Activated T-helper 2 cell treated with anti-CD3 and anti-CD28 coated beads, Interferon-gamma antibody, Interleukin-2, Interleukin-4, amounts not matched to agents 10 μg/mL and 5 μg/mL and 100 μg/mL, durations not matched to agents 14 hours and 24 hours and 36 hours (primary cell): ENCODE measurements at regions of chr11 and their contacts with region 1.

Region 1: GRCh38 chr11:117946842-117947526 is 17.8 kb upstream of the TMPRSS13 start:
- DNase-seq: peak; percentile 74
- H3K4me3 Mint-ChIP-seq: no peak overlapping the region
- H3K27ac Mint-ChIP-seq: peak overlapping the region; percentile 60
- H3K4me1 Mint-ChIP-seq: peaks cover 78% of the 10 kb centered on the region
- H3K27me3 Mint-ChIP-seq: no peaks in the 10 kb centered on the region

Region 2: DNA sequence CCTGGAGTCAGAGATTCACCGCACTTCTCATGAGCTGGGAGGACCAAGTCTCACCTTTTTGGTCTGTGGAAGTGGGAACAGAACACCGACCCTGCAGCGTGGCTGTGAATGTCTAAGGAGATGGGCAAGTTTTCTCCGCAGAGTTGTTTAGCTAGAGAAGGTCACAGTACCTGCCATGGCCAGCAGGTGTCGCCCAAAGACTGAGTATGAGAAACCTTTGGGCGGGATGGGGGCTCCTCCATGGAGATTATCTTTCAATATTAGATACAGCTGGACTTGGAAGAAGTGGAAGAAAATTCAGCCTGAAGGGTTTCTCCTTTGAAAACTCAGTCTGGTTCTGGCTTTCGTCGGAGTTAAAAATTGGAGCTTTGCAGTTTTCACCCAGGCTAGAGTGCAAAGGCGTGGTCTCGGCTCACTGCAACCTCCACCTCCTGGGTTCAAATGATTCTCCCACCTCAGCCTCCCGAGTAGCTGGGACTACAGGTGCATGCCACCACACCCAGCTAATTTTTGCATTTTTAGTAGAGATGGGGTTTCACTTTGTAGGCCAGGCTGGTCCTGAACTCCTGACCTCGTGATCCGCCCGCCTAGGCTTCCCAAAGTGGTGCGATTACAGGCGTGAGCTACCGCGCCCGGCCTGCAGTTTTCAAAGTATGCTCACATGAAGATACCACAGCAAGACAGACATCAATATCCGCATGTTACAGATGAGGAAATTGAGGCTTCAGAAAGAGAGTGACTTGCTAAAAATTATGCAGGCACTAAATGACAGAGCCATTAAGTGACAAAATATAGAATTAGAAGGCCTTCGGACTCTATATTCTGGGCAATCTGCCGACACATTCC is 139.3 kb before region 1 on chr11:
- intact Hi-C with region 1: loop called (anchors 2 kb)
- DNase-seq: peak; percentile 54
- H3K4me3 Mint-ChIP-seq: no peak overlapping the region
- H3K27ac Mint-ChIP-seq: no peak overlapping the region
- H3K4me1 Mint-ChIP-seq: peaks cover 8% of the 10 kb centered on the region
- H3K27me3 Mint-ChIP-seq: peaks cover 10% of the 10 kb centered on the region

Region 3: GRCh38 chr11:117843666-117844484 is 103.1 kb before region 1 on chr11:
- intact Hi-C with region 1: loop called (anchors 1 kb)
- DNase-seq: peak; percentile 66
- H3K4me3 Mint-ChIP-seq: no peak overlapping the region
- H3K27ac Mint-ChIP-seq: no peak overlapping the region
- H3K4me1 Mint-ChIP-seq: no peaks in the 10 kb centered on the region
- H3K27me3 Mint-ChIP-seq: peaks cover 7% of the 10 kb centered on the region

Region 4: DNA sequence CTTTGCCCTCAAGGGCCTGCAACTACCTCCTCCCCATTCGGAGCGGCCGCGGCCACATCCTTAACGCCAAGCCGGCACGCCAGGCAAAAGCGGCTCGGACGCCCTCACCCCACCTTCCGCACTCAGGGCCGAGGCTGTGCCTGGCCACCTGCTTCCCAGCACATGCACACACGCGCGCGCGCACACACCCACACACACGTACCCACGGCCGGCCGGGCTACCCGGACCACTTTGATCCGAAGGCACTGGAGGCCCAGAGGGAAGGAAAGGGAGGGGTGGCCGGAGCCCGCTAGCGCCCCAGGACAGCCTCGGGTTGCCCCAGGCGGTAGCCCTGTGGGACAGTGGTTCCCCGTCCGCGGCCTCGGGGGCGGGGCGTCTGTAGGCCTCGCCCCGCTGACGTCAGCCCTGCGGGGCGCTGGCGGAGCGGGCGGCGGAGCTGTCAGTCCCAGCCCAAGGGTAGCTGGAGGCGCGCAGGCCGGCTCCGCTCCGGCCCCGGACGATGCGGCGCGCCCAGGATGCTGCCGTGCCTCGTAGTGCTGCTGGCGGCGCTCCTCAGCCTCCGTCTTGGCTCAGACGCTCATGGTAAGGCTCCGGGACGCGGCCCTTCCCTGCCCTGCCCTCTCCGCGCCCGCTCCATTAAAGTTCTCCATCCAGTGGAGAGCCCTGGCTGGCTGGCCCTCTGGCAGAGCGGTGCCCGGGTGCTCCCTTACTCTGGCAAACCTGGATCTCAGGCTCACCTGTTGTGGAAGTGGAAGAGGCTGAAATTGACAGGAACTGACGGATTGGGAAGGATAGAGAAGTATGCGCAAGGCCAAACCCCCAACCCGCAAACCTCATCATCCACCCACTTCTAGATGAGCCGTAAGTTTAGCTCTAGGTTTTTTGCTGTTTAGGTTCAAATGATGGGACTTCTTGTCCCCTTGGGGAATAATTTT is 39.2 kb after region 1 on chr11 and contains the start of gene IL10RA:
- intact Hi-C with region 1: loop called (anchors 1 kb)
- DNase-seq: peak; percentile 85
- H3K4me3 Mint-ChIP-seq: peak within 1 kb of the TSS; percentile 87
- H3K27ac Mint-ChIP-seq: peak within 1 kb of the TSS; percentile 90
- H3K4me1 Mint-ChIP-seq: peaks cover 58% of the 10 kb centered on the region
- H3K27me3 Mint-ChIP-seq: no peaks in the 10 kb centered on the region
- total RNA-seq, gene IL10RA: 144 and 147 TPM in 2 replicates

Region 5: DNA sequence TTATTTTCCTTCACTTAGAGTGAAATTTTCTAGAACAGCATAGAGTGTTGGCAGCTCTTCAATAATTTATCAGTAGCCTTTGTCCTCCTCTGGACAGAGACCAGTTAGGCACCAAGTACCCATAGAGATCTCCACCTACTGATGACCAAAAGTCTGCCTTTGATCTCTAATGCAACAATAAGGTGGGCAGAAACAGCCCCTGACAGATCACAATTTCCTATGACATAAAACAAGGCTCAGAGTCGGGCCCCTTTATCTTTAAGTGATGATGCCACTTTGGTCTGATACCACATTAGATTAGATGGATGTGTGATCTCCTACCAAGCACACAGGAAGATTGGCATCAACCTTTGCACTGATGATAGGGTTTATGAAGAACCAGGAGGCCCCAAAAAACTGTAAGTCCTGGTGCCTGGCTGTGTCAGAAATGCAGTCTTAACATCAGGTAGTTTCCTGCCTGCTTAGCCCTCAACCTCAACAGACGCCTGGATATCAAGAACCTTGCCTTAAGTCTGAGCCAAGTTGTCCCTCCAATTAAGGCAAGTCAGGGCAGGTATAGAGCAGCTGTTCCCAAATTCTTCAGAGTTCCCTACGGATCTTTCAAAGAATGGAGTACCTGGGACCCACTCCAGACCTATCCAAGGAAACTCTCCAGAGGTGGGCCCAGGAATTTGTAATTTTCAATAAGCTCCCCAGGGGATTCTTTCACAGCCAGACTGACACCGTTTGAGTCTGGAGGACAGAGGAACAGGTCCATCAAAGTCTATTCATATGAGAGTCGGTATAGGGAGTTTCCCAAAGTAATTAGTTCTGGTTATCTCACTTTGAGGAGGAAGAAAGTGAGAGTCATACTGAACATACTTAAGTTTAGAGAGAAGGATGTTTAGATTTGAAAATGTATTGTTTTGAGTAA is 99.3 kb after region 1 on chr11:
- intact Hi-C with region 1: loop called (anchors 1 kb)
- DNase-seq: peak; percentile 25
- H3K4me3 Mint-ChIP-seq: peak overlapping the region; percentile 17
- H3K27ac Mint-ChIP-seq: peak overlapping the region; percentile 97
- H3K4me1 Mint-ChIP-seq: peaks cover 83% of the 10 kb centered on the region
- H3K27me3 Mint-ChIP-seq: no peaks in the 10 kb centered on the region